Activated T-helper 1 cell treated with anti-CD3 and anti-CD28 coated beads, Interleukin-12 subunit alpha, Interleukin-12 subunit beta, Interleukin-2, Interleukin-4 antibody, amounts not matched to agents 30 ng/mL and 10 ng/mL and 1 ng/mL, durations not matched to agents 14 hours and 24 hours and 36 hours (primary cell): ENCODE measurements at regions of chr16 and their contacts with region 1.

Region 1: GRCh38 chr16:79071424-79071823 is 529.1 kb downstream of the MAF start:
- DNase-seq: no peak
- H3K4me3 Mint-ChIP-seq: no peak overlapping the region
- H3K27ac Mint-ChIP-seq: peak overlapping the region; percentile 21
- H3K4me1 Mint-ChIP-seq: peaks cover 74% of the 10 kb centered on the region
- H3K27me3 Mint-ChIP-seq: peaks cover 5% of the 10 kb centered on the region

Region 2: DNA sequence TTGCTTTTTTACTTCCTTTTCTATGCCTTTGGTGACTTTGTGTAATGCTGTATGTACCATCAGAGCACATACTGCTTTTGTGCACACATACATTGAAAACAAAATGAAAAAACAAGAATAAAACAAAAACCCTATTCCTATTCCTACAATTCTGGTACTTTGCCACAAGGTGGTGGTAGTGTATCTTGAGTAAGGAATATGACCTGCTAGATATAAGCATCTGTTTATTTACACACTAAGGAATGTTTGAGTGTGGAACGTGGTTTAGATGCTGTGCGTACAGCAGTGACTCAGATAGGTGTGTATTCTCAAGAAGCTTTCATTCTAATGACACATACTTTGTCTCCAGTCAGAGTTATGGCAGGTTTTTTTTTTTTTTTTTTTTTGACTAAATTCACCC is 365.7 kb before region 1 on chr16:
- intact Hi-C with region 1: loop called (anchors 5 kb)
- DNase-seq: peak; percentile 2
- H3K4me3 Mint-ChIP-seq: no peak overlapping the region
- H3K27ac Mint-ChIP-seq: no peak overlapping the region
- H3K4me1 Mint-ChIP-seq: peaks cover 14% of the 10 kb centered on the region
- H3K27me3 Mint-ChIP-seq: peaks cover 2% of the 10 kb centered on the region

Region 3: GRCh38 chr16:78900044-78900811 is 171.2 kb before region 1 on chr16:
- intact Hi-C with region 1: loop called (anchors 1 kb)
- DNase-seq: no peak
- H3K4me3 Mint-ChIP-seq: no peak overlapping the region
- H3K27ac Mint-ChIP-seq: peak overlapping the region; percentile 51
- H3K4me1 Mint-ChIP-seq: peaks cover 42% of the 10 kb centered on the region
- H3K27me3 Mint-ChIP-seq: no peaks in the 10 kb centered on the region

Region 4: DNA sequence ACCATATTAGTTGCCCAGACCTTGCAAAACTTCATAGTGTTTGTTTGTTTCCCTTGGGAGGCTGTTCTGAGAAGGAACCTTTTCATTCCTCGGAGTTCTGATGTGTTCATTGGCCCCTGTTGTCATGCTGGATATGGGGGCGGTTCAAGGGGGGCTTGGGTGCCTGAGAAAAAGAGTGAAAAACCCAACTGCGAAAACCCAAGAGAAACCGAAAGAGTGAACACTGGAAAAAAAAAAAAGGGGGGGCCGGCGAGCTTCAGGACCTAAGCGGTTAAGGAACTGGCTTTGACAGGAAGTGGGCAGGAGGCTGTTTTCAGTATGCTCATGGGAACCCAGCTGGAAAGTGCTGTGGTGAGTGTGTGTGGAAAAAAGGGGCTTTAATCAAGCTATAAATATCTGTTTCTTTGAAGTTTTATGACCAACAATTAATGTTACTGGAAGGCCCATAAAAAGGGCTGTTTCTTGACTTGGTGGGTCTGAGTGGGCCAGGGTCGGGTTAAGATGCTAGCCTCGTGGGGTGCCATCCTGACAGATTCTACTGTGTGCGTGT is 18.4 kb after region 1 on chr16:
- intact Hi-C with region 1: loop called (anchors 1 kb)
- DNase-seq: peak; percentile 66
- H3K4me3 Mint-ChIP-seq: peak overlapping the region; percentile 62
- H3K27ac Mint-ChIP-seq: peak overlapping the region; percentile 95
- H3K4me1 Mint-ChIP-seq: peaks cover 53% of the 10 kb centered on the region
- H3K27me3 Mint-ChIP-seq: no peaks in the 10 kb centered on the region

Region 5: DNA sequence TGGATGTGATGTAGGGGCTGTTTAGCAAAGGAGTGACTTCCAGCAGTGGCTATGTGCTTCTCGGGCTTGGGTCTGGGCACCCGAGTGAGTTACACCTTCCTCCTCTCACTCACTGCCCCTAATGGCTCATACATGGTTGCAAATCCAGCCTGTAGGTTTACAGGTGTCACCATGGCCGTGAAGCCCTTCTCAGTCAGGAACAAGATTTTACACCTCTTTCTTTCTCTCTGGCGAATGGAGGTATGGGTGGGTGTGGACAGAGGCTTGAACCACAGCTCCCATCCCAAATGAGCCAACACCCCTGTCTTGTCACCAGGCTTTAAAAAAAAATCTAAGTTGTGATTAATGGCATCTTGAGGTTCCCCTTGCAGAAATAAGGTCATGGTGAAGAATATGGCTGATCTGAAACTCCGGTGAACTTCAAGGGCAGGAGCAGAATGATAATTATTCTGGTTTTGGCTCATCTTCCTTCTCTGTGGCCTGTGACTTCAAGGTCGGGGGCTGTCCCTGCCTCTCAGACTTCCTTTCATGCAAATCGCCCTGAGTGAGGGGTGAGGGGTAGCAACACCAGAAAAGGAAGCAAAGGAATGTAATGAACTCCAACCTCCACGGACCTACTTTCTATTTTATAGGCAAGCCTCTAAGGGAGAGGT is 197.9 kb after region 1 on chr16:
- intact Hi-C with region 1: loop called (anchors 1 kb)
- DNase-seq: peak; percentile 58
- H3K4me3 Mint-ChIP-seq: peak overlapping the region; percentile 60
- H3K27ac Mint-ChIP-seq: peak overlapping the region; percentile 89
- H3K4me1 Mint-ChIP-seq: peaks cover 88% of the 10 kb centered on the region
- H3K27me3 Mint-ChIP-seq: peaks cover 12% of the 10 kb centered on the region

Region 6: DNA sequence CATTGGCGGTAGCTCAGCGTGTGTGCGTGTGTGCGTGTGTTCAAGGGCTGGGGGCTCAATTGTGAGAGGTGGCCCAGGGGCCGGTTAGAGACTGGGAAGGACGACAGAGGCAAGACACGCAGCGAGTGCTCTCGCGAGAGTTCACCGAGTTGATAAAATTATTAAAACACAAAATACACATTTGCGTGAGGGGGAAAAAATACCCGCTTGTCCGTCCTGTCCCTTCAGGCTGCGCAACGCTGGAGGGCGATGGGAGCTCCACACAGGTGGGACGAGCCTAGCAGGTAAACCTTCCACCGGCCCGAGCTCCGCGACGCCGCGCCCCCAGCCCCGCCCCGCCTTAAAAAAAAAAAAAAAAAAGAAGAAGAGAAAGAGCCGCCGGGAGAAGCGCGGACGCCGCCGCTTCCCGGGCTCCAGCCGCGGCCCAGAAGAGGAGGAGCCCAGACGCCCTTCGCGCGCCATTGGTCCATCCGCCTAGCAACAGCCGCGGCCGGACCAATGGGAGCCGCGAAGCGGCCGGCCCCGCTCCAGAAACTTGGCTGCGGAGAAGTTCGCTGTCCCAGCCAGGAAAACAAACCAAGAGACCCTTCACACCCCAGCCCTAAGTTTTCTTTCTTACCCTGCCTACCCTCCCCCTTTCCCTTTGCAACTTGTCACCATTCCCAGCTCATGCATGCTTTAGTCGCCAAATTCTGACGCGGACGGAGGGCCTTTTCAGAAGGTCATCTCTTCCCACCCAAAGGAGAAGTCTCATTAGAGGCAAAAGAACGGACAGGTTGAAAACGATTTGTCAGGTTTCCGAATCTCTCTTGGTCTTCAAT is 699.0 kb after region 1 on chr16:
- intact Hi-C with region 1: loop called (anchors 10 kb)
- DNase-seq: peak; percentile 71
- H3K4me3 Mint-ChIP-seq: peak overlapping the region; percentile 86
- H3K27ac Mint-ChIP-seq: peak overlapping the region; percentile 84
- H3K4me1 Mint-ChIP-seq: peaks cover 36% of the 10 kb centered on the region
- H3K27me3 Mint-ChIP-seq: no peaks in the 10 kb centered on the region